ENCODE measurements at regions of chrX and their contacts with region 1.

Region 1: DNA sequence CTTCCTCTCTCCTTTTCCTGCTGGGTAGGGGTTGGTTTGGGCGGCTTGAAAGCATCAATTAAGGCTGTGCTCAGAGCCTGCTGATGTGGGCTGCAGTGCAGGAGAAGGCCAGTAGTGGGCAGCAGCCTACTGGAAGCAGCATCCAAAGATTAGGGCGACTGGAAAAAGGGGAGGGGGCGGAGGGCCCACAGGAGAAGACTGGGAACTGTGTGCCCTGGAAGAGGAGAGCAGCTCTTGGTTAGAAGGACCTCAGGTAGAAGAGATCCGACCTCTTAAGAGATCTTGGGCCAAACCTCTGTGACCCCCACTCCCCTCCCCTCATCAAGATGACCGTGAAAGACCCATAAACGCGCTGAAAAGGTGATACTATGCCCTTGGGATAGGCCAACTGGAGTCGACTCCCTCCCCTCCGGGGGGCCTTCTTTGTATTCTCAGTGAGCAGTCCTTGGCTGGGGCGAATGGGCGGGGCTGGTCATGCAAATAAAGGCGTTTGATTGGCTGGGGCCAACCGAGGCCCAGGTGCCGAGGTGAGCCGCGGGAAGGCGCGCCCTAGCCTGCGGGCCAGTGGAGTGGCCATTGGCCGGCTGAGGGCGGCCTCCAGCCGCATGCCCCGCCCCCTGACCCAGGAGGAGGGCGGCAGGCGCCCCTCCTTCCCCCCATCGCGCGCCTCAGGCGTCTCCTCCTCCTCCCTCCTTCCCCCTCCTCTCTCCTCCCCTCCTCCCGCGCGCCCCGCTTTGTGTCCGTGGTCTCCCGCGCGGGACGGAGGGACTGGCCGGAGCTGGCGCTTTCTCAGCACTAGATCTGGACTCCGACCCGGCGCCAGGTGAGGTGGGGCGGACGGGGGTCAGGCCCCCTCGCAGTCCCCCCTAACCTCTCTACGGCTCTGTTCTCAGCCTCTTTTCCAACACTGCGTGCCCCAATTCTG is 10.1 kb downstream of the DLG3 start:
- DNase-seq: peak; percentile 94 to 99
- H3K4me3 ChIP-seq: peak overlapping the region; percentile 82
- H3K4me1 ChIP-seq: peaks cover 22% of the 10 kb centered on the region
- H3K27me3 ChIP-seq: no peaks in the 10 kb centered on the region

Region 2: DNA sequence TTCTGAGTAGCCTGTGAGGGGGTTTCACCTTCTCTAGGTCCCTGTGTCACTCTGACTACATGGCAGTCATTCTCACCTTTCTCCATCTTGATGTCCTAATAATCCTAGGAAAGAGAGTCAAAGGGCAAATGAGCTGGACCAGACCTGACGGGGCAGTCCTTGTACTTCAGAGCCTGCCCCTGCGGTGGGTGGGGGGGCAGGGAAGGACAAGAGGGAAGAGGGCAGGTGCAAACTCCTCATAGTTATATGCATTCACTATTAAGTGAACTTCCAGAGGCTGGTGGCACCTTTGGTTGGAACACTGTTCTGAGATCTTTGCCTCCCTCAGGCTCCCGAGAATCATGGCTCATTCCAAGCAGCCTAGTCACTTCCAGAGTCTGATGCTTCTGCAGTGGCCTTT is 220.3 kb before region 1 on chrX and contains the start of gene AWAT1:
- in situ Hi-C with region 1: no loop called
- DNase-seq: no peak
- H3K4me3 ChIP-seq: no peak within 1 kb of the TSS
- H3K4me1 ChIP-seq: no peaks in the 10 kb centered on the region
- H3K27me3 ChIP-seq: peaks cover 5% of the 10 kb centered on the region; the same call in 1 of the 2 replicates

Region 3: DNA sequence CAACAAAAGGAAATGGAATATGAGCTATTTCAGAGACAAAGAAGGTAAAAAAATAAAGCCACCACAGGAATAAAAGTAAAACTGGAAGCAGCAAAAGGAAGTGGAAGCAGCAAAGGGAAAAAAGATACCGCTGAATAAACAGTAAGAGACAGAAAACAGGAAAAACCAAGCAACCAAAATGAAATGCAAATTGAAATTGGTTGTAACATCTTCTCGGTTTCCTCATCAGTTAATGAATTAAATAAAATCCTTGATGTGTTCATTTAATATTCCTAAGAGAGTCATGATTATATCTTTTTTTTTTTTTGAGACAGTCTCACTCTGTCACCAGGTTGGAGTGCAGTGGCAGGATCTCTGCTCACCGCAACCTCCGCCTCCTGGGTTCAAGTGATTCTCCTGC is 122.7 kb after region 1 on chrX:
- in situ Hi-C with region 1: no loop called
- DNase-seq: no peak
- H3K4me3 ChIP-seq: no peak overlapping the region
- H3K4me1 ChIP-seq: no peaks in the 10 kb centered on the region
- H3K27me3 ChIP-seq: no peaks in the 10 kb centered on the region

Region 4: DNA sequence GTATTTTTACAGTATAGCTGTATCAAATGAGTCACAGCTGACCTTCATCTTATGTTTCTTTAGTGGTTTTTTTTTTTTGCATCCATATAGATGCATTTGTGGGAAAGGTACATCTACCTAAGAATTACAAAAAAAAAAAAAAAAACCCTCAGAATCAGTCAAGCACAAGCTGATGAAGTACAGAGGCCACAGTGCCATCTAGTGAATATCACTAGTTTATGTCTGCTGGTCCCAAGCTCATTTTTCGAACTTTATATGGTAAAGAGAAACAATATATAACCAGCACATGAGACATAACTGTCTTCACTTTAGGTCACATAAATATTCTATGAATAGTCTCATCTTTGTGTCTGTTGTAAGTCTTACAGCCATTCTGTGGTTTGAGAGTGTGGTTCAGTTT is 210.0 kb after region 1 on chrX:
- in situ Hi-C with region 1: loop called (anchors 10 kb)
- DNase-seq: peak; percentile 13 to 14
- H3K4me3 ChIP-seq: no peak overlapping the region
- H3K4me1 ChIP-seq: no peaks in the 10 kb centered on the region
- H3K27me3 ChIP-seq: peaks cover 23% of the 10 kb centered on the region

Region 5: GRCh38 chrX:71181910-71182799 is 727.5 kb after region 1 on chrX:
- in situ Hi-C with region 1: loop called (anchors 25 kb)
- DNase-seq: peak; percentile 96 to 99
- H3K4me3 ChIP-seq: peak overlapping the region; percentile 32
- H3K4me1 ChIP-seq: peaks cover 31% of the 10 kb centered on the region
- H3K27me3 ChIP-seq: no peaks in the 10 kb centered on the region

Measured in HAP-1 (cell line).